Activated naive CD8-positive, alpha-beta T cell treated with anti-CD3 and anti-CD28 coated beads, Interleukin-2, amount 10 ng/mL, durations not matched to agents 7 days and 5 days (primary cell): ENCODE measurements at regions of chr2 and their contacts with region 1.

Region 1: GRCh38 chr2:168490015-168490874 is 34.2 kb downstream of the CERS6 start:
- DNase-seq: no peak
- ATAC-seq: peak; percentile 90
- H3K4me3 Mint-ChIP-seq: peak overlapping the region; percentile 81
- H3K27ac Mint-ChIP-seq: peak overlapping the region; percentile 76
- H3K4me1 Mint-ChIP-seq: peaks cover 31% of the 10 kb centered on the region
- H3K27me3 Mint-ChIP-seq: no peaks in the 10 kb centered on the region

Region 2: GRCh38 chr2:168455648-168456520 is 34.4 kb before region 1 on chr2 and contains the start of gene CERS6:
- POLR2A ChIA-PET with region 1: interaction called, 12 read pairs
- DNase-seq: peak; percentile 88
- ATAC-seq: peak; percentile 95
- H3K4me3 Mint-ChIP-seq: no peak within 1 kb of the TSS
- H3K27ac Mint-ChIP-seq: peak within 1 kb of the TSS; percentile 80
- H3K4me1 Mint-ChIP-seq: peaks cover 26% of the 10 kb centered on the region
- H3K27me3 Mint-ChIP-seq: no peaks in the 10 kb centered on the region
- total RNA-seq, gene CERS6: 11.9 to 12.2 TPM

Region 3: DNA sequence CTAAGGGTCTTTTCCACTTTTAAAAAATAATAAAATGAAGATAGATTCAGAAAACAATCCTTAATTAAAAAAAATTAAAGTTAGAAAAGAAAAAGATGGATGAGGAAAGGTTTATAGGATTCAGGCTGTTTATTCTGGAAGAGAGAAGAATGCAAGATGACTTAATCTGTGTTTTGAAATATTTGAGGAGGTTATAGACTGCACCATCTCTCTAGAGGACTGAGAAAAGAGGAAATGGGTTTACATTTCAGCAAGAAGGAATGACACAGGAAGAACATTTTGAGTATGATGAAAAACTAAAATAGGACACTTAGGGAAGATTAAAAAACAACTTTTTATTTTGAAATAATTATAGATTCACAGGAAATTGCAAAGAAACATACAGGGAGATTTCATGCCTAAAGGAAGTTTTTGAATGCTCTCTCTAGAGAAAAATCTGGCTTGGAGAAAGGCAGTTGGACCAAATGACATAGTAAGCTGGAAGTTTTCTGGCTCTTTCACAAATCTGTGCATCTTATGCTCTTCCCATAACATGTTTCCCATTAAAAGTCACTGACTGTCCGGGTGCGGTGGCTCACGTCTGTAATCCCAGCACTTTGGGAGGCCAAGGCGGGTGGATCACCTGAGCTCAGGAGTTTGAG is 40.9 kb after region 1 on chr2:
- POLR2A ChIA-PET with region 1: no interaction called
- DNase-seq: no peak
- ATAC-seq: no peak
- H3K4me3 Mint-ChIP-seq: no peak overlapping the region
- H3K27ac Mint-ChIP-seq: no peak overlapping the region
- H3K4me1 Mint-ChIP-seq: peaks cover 13% of the 10 kb centered on the region
- H3K27me3 Mint-ChIP-seq: no peaks in the 10 kb centered on the region